HCT116 (cell line): ENCODE measurements at regions of chr4 and their contacts with region 1.

Region 1: GRCh38 chr4:162841753-162842152 is 324.9 kb downstream of the NAF1 start:
- DNase-seq: no peak
- ATAC-seq: no peak
- H3K4me3 ChIP-seq: no peak overlapping the region
- H3K27ac ChIP-seq: no peak overlapping the region
- H3K4me1 ChIP-seq: no peaks in the 10 kb centered on the region
- H3K27me3 ChIP-seq: no peaks in the 10 kb centered on the region
- CTCF ChIP-seq: no peak
- POLR2A ChIP-seq: no peak
- RAD21 ChIP-seq: no peak

Region 2: GRCh38 chr4:162878096-162878495 is 36.3 kb after region 1 on chr4:
- CTCF ChIA-PET with region 1: no interaction called
- POLR2A ChIA-PET with region 1: no interaction called
- RAD21 ChIA-PET with region 1: no interaction called
- intact Hi-C with region 1: loop called (anchors 1 kb)
- DNase-seq: no peak
- ATAC-seq: no peak
- H3K4me3 ChIP-seq: no peak overlapping the region
- H3K27ac ChIP-seq: no peak overlapping the region
- H3K4me1 ChIP-seq: no peaks in the 10 kb centered on the region
- H3K27me3 ChIP-seq: no peaks in the 10 kb centered on the region
- CTCF ChIP-seq: no peak
- POLR2A ChIP-seq: no peak
- RAD21 ChIP-seq: no peak

Region 3: GRCh38 chr4:163467082-163467770 is 625.5 kb after region 1 on chr4:
- CTCF ChIA-PET with region 1: no interaction called
- POLR2A ChIA-PET with region 1: no interaction called
- RAD21 ChIA-PET with region 1: no interaction called
- intact Hi-C with region 1: no loop called
- DNase-seq: no peak
- ATAC-seq: no peak
- H3K4me3 ChIP-seq: no peak overlapping the region
- H3K27ac ChIP-seq: no peak overlapping the region
- H3K4me1 ChIP-seq: no peaks in the 10 kb centered on the region
- H3K27me3 ChIP-seq: no peaks in the 10 kb centered on the region
- CTCF ChIP-seq: no peak
- POLR2A ChIP-seq: no peak
- RAD21 ChIP-seq: no peak